Activated B cell treated with CpG ODN at 0.5 μM for 24 hours (primary cell): ENCODE measurements at regions of chr1 and their contacts with region 1.

Region 1: GRCh38 chr1:160768295-160768657 is 27.7 kb upstream of the LY9 start:
- DNase-seq: peak; percentile 49
- ATAC-seq: peak; percentile 90
- H3K4me3 Mint-ChIP-seq: peak overlapping the region; percentile 78
- H3K27ac Mint-ChIP-seq: peak overlapping the region; percentile 87
- H3K4me1 Mint-ChIP-seq: peaks cover 40% of the 10 kb centered on the region
- H3K27me3 Mint-ChIP-seq: no peaks in the 10 kb centered on the region
- CTCF ChIP-seq: peak; percentile 30

Region 2: DNA sequence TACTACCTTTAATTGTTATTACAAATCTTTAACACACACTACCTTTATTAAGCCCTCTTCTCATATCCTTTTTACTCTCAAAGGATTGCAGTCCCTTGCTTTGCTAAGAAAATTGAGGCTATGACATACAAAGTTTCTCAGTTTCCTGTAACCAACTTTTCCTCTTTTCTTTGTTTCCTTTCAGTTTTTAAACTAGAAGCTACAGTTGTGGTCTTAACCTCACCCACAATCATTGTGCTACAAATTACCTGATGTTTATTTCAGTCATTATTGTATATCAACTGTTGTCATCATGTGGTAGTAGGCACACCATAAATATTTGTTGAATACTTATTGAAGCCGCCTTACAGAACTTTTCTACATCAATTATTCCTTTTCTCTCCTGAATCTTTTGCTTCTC is 297.0 kb before region 1 on chr1:
- CTCF ChIA-PET with region 1: no interaction called
- POLR2A ChIA-PET with region 1: no interaction called
- intact Hi-C with region 1: no loop called
- DNase-seq: no peak
- ATAC-seq: no peak
- H3K4me3 Mint-ChIP-seq: no peak overlapping the region
- H3K27ac Mint-ChIP-seq: no peak overlapping the region
- H3K4me1 Mint-ChIP-seq: peaks cover 18% of the 10 kb centered on the region
- H3K27me3 Mint-ChIP-seq: no peaks in the 10 kb centered on the region
- CTCF ChIP-seq: no peak

Region 3: GRCh38 chr1:160681067-160681890 is 87.0 kb before region 1 on chr1:
- CTCF ChIA-PET with region 1: interaction called, 36 read pairs
- POLR2A ChIA-PET with region 1: interaction called, 3 read pairs
- intact Hi-C with region 1: loop called (anchors 1 kb)
- DNase-seq: peak; percentile 67
- ATAC-seq: peak; percentile 89
- H3K4me3 Mint-ChIP-seq: no peak overlapping the region
- H3K27ac Mint-ChIP-seq: peak overlapping the region; percentile 79
- H3K4me1 Mint-ChIP-seq: peaks cover 52% of the 10 kb centered on the region
- H3K27me3 Mint-ChIP-seq: no peaks in the 10 kb centered on the region
- CTCF ChIP-seq: no peak

Region 4: DNA sequence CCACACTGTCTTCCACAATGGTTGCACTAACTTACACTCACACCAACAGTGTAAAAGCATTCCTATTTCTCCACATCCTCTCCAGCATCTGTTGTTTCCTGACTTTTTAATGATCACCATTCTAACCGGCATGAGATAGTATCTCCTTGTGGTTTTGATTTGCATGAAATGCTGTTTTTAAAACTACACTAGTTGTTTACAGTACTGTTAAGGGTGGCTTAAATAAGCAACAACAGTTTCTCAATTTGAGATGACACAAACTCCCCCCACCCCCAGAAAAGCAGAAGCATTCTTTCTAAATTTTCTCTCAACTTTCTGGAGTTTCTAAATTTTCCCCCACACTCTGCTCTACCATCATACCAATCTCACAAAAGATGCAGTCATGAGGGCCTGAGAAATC is 36.3 kb before region 1 on chr1:
- CTCF ChIA-PET with region 1: interaction called, 89 read pairs
- POLR2A ChIA-PET with region 1: interaction called, 3 read pairs
- intact Hi-C with region 1: loop called (anchors 1 kb)
- DNase-seq: no peak
- ATAC-seq: no peak
- H3K4me3 Mint-ChIP-seq: peak overlapping the region; percentile 1
- H3K27ac Mint-ChIP-seq: peak overlapping the region; percentile 88
- H3K4me1 Mint-ChIP-seq: peaks cover 39% of the 10 kb centered on the region
- H3K27me3 Mint-ChIP-seq: no peaks in the 10 kb centered on the region
- CTCF ChIP-seq: no peak

Region 5: GRCh38 chr1:160789702-160790611 is 21.7 kb after region 1 on chr1:
- CTCF ChIA-PET with region 1: interaction called, 6 read pairs
- POLR2A ChIA-PET with region 1: interaction called, 11 read pairs
- intact Hi-C with region 1: loop called (anchors 1 kb)
- DNase-seq: peak; percentile 74
- ATAC-seq: peak; percentile 84
- H3K4me3 Mint-ChIP-seq: peak overlapping the region; percentile 59
- H3K27ac Mint-ChIP-seq: peak overlapping the region; percentile 98
- H3K4me1 Mint-ChIP-seq: peaks cover 44% of the 10 kb centered on the region
- H3K27me3 Mint-ChIP-seq: no peaks in the 10 kb centered on the region
- CTCF ChIP-seq: no peak

Region 6: GRCh38 chr1:160830321-160831153 is 62.3 kb after region 1 on chr1:
- CTCF ChIA-PET with region 1: interaction called, 14 read pairs
- POLR2A ChIA-PET with region 1: no interaction called
- intact Hi-C with region 1: loop called (anchors 1 kb)
- DNase-seq: peak; percentile 56
- ATAC-seq: peak; percentile 83
- H3K4me3 Mint-ChIP-seq: no peak overlapping the region
- H3K27ac Mint-ChIP-seq: peak overlapping the region; percentile 68
- H3K4me1 Mint-ChIP-seq: peaks cover 9% of the 10 kb centered on the region
- H3K27me3 Mint-ChIP-seq: no peaks in the 10 kb centered on the region
- CTCF ChIP-seq: no peak

Region 7: GRCh38 chr1:161165742-161166668 is 397.7 kb after region 1 on chr1 and contains the start of gene PPOX:
- CTCF ChIA-PET with region 1: no interaction called
- POLR2A ChIA-PET with region 1: interaction called, 10 read pairs
- intact Hi-C with region 1: no loop called
- DNase-seq: peak; percentile 82
- ATAC-seq: peak; percentile 94
- H3K4me3 Mint-ChIP-seq: peak within 1 kb of the TSS; percentile 88
- H3K27ac Mint-ChIP-seq: peak within 1 kb of the TSS; percentile 98
- H3K4me1 Mint-ChIP-seq: peaks cover 48% of the 10 kb centered on the region
- H3K27me3 Mint-ChIP-seq: no peaks in the 10 kb centered on the region
- CTCF ChIP-seq: no peak
- total RNA-seq, gene PPOX: 31.5 and 40.7 TPM in 2 replicates